ENCODE measurements at regions of chr12 and their contacts with region 1.

Region 1: DNA sequence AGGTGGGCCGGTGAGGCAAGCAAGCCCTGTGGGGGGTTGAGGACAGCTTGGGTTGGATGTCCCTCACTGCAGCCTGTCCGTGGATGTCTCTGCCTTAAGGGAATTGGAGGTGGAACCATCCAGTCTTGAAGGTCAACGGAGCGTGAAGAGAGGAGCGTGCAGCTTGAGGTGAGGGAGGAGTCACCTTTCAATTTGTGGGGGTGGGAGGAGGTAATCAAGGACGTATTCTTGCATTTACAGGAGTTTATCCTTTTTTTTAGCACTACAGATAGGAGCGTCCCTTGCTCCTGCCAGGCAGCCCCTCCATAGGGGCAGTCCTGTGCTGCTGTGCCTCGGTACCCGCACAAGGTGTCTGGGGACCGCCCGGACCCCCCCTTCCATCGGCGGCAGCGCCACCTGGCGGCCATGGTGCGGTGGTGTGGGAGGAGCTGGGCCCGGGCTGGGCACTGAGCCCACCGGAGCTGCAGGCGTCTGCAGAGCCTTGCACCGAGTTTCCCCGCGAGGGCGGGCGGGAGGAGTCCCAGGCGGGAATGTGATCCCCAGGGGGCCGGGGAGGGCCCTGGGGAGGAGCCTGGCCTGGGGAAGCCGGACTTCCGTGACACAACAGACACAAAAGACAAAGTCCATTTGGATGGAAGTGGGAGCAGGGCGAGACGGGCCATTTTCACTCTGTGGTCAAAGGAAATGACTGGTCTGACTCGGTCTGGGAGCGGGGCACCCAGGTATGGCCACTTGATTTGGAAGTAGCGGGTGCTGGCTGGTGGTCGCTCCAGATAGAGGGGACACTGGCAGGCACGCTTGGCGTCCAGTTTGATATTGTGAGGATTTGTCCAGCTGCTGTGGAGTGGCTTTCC is 923 bp downstream of the DNAJC22 start:
- DNase-seq: peak in 1 of 2 experiments; percentile 98
- H3K4me3 ChIP-seq: peak overlapping the region in 3 of 4 experiments; percentile 37 to 69 (median 38); a peak in 6 of 8 replicates
- H3K27ac ChIP-seq: no peak overlapping the region
- H3K4me1 ChIP-seq: peaks cover 4 to 22% (median 15%) of the 10 kb centered on the region in 4 experiments
- H3K27me3 ChIP-seq: peaks cover 49 to 72% (median 70%) of the 10 kb centered on the region in 4 experiments
- CTCF ChIP-seq: peak; percentile 78 to 93 (median 92)
- EP300 ChIP-seq: no peak
- POLR2A ChIP-seq: no peak
- RAD21 ChIP-seq: peak; percentile 39 to 56; a peak in 3 of 4 replicates

Region 2: DNA sequence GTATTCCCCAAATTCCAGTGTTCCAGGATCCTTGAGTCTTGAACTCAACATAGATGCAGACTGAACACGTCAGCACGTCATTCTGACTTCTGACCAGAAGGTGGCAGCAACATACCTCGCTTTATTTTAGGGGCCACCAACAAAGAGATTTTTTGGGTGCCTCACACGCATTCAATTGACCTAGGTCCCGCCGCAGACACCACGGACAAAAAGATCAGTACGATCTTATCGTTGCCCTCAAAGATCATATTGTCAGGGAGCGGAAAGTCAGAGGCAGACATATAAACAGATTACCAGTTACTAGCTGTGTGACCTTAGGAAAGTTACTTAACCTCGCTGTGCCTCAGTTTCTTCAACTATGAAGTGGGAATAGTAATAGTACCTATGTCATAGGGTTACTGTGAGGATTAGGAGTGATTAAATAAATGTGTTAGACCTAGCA is 59.2 kb before region 1 on chr12:
- CTCF ChIA-PET with region 1: interaction called, 147 read pairs
- POLR2A ChIA-PET with region 1: interaction called, 26 read pairs
- DNase-seq: peak in 1 of 2 experiments; percentile 82
- H3K4me3 ChIP-seq: no peak overlapping the region
- H3K27ac ChIP-seq: no peak overlapping the region
- H3K4me1 ChIP-seq: peaks cover 0 to 9% (median 7%) of the 10 kb centered on the region in 4 experiments; a peak in 5 of 7 replicates
- H3K27me3 ChIP-seq: peaks cover 4 to 17% (median 16%) of the 10 kb centered on the region in 4 experiments
- CTCF ChIP-seq: peak in 2 of 3 experiments; percentile 79 to 87; a peak in 3 of 4 replicates
- EP300 ChIP-seq: no peak
- POLR2A ChIP-seq: no peak
- RAD21 ChIP-seq: peak; percentile 84 to 86

Region 3: DNA sequence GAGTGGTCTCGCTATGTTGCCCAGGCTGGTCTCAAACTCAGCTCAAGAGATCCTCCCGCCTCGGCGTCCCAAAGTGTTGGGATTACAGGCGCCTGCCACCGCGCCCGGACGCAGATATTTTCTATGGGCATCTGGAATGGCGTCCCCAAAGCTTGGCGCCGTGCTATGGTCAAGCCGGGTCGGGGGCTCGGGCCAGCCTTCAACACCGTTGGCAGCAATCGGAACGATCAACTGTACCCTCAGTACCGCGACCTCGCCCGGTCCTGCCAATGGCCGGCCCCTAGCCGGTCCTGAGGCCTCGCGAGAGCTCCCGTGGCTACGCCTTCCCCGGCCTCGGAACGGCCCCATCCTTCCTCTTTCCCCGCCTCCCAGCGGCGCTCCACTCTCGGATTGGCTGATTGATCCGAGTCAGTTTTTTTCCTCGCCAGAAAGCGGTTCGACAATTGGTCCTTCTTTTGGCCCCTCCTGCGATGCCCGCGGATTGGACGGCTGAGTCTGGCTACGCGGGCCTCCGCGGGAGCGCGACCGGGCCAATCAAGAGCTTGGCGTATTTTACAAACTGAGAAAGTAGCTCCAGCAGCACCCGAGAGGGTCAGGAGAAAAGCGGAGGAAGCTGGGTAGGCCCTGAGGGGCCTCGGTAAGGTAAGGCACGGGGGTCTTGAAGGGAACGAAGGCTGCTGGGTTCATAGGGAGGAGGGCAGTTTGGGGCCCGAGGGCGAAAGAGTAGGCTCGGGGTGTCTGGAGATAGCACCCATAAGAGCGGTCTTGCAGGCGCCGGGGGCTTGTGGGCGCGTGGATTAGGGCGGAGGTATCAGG is 24.7 kb before region 1 on chr12 and contains the start of gene TROAP:
- CTCF ChIA-PET with region 1: interaction called, 33 read pairs
- POLR2A ChIA-PET with region 1: interaction called, 14 read pairs
- DNase-seq: peak; percentile 94 to 95
- H3K4me3 ChIP-seq: peak within 1 kb of the TSS; percentile 87 to 96 (median 90)
- H3K27ac ChIP-seq: peak within 1 kb of the TSS; percentile 66
- H3K4me1 ChIP-seq: peaks cover 4 to 13% (median 6%) of the 10 kb centered on the region in 4 experiments; a peak in 6 of 7 replicates
- H3K27me3 ChIP-seq: no peaks in the 10 kb centered on the region
- CTCF ChIP-seq: no peak
- EP300 ChIP-seq: no peak
- POLR2A ChIP-seq: peak in 1 of 2 experiments; percentile 70; a peak in 2 of 3 replicates
- RAD21 ChIP-seq: no peak
- total RNA-seq, gene TROAP: 52.0 and 54.0 TPM in 2 replicates

Region 4: DNA sequence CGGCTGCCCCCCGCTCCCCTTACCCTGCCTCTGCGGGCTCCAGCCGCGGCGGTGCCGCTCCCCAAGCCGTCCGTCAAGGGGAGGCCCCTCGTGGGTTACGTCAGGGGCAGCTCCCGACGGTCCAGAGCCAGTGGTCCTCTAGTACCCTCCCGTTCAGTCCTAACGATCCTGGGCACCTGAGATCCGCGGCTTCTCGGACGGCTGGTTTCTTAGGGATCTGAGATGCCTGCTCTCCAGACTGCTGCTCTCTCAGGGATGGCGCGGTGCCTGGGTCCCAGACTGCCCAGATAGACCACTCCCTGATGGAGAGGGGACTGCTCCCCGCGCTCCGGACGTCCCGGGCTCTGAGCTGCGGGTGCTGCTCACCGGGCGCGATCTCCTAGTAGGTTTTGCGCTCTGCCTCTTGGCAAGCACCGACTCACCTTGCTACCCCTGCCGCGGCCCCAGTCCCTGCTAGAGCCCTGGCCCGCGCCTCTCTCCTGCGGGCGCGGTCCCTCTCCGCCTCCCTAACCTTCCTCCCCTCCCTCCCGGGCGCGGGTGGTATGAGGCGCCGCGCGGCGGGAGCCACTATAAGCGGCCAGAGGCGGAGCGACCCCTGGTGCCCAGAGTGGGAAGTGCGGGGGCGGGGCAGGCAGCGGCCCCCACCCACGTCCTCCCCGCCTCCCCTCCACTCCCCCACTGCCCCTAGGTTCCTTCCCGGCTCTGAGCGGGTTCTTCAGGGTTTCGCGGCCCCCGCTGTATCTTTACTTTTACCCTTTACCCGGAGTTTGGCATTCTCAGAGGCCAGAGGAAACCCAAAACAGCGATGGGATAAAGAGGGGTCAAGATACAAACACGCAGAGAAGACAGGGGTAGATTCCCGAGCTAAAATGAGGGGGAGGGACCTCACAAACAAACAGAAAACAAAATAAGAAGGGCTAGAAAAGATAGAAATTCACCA is 10.7 kb before region 1 on chr12 and contains the start of gene C1QL4:
- CTCF ChIA-PET with region 1: interaction called, 193 read pairs
- POLR2A ChIA-PET with region 1: interaction called, 32 read pairs
- DNase-seq: peak in 1 of 2 experiments; percentile 99
- H3K4me3 ChIP-seq: peak within 1 kb of the TSS; percentile 10 to 63 (median 34); a peak in 7 of 8 replicates
- H3K27ac ChIP-seq: no peak within 1 kb of the TSS
- H3K4me1 ChIP-seq: peaks cover 0 to 44% (median 26%) of the 10 kb centered on the region in 4 experiments; a peak in 6 of 7 replicates
- H3K27me3 ChIP-seq: peaks cover 76 to 100% (median 94%) of the 10 kb centered on the region in 4 experiments
- CTCF ChIP-seq: peak; percentile 67 to 92 (median 89)
- EP300 ChIP-seq: no peak
- POLR2A ChIP-seq: no peak
- RAD21 ChIP-seq: peak; percentile 22 to 49; a peak in 3 of 4 replicates
- total RNA-seq, gene C1QL4: 0.28 and 0.59 TPM in 2 replicates

Region 5: DNA sequence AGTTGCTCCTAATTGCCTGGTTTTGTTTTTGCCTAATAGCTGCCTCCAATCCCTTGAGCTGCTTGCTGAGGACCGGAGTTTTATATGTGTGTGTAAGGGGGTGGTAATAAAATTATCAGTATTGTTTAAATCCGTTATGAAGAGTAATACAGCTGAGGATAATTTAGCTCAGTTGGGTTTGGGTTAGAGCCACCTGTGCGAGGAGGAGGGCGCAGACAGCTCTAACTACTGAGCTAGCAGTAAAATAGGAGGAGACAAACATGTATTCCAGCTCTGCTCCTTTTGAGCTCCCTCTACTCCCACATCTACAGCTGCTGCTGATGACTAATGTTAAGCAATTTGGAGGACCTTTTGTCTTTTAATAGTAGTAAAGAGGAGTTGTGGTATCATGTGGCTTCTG is 81.2 kb after region 1 on chr12:
- CTCF ChIA-PET with region 1: no interaction called
- POLR2A ChIA-PET with region 1: no interaction called
- DNase-seq: no peak
- H3K4me3 ChIP-seq: no peak overlapping the region
- H3K27ac ChIP-seq: no peak overlapping the region
- H3K4me1 ChIP-seq: peaks cover 0 to 2% (median 0%) of the 10 kb centered on the region in 4 experiments; a peak in 1 of 7 replicates
- H3K27me3 ChIP-seq: no peaks in the 10 kb centered on the region
- CTCF ChIP-seq: no peak
- EP300 ChIP-seq: no peak
- POLR2A ChIP-seq: no peak
- RAD21 ChIP-seq: no peak

Region 6: GRCh38 chr12:49538510-49539403 is 191.1 kb after region 1 on chr12 and contains the start of gene KCNH3:
- CTCF ChIA-PET with region 1: interaction called, 22 read pairs
- POLR2A ChIA-PET with region 1: interaction called, 5 read pairs
- DNase-seq: peak in 1 of 2 experiments; percentile 76
- H3K4me3 ChIP-seq: peak within 1 kb of the TSS; percentile 29 to 56 (median 38)
- H3K27ac ChIP-seq: no peak within 1 kb of the TSS
- H3K4me1 ChIP-seq: peaks cover 0 to 25% (median 9%) of the 10 kb centered on the region in 4 experiments; a peak in 6 of 7 replicates
- H3K27me3 ChIP-seq: peaks cover 64 to 87% (median 84%) of the 10 kb centered on the region in 4 experiments
- CTCF ChIP-seq: no peak
- EP300 ChIP-seq: no peak
- POLR2A ChIP-seq: no peak
- RAD21 ChIP-seq: no peak
- total RNA-seq, gene KCNH3: 0.24 and 0.36 TPM in 2 replicates

Region 7: GRCh38 chr12:49553512-49554088 is 206.0 kb after region 1 on chr12:
- CTCF ChIA-PET with region 1: interaction called, 25 read pairs
- POLR2A ChIA-PET with region 1: interaction called, 5 read pairs
- DNase-seq: no peak
- H3K4me3 ChIP-seq: no peak overlapping the region
- H3K27ac ChIP-seq: no peak overlapping the region
- H3K4me1 ChIP-seq: peaks cover 0 to 12% (median 8%) of the 10 kb centered on the region in 4 experiments; a peak in 6 of 7 replicates
- H3K27me3 ChIP-seq: peaks cover 4 to 28% (median 20%) of the 10 kb centered on the region in 4 experiments
- CTCF ChIP-seq: peak in 2 of 3 experiments; percentile 82 to 99; a peak in 3 of 4 replicates
- EP300 ChIP-seq: no peak
- POLR2A ChIP-seq: no peak
- RAD21 ChIP-seq: peak; percentile 75 to 85